A673 (cell line): ENCODE measurements at regions of chr2 and their contacts with region 1.

Region 1: GRCh38 chr2:26970244-26970920 is at the start of gene MAPRE3:
- DNase-seq: peak; percentile 82
- H3K4me3 ChIP-seq: peak within 1 kb of the TSS; percentile 75
- H3K27ac ChIP-seq: no peak within 1 kb of the TSS
- H3K4me1 ChIP-seq: peaks cover 6% of the 10 kb centered on the region
- H3K27me3 ChIP-seq: peaks cover 14% of the 10 kb centered on the region
- CTCF ChIP-seq: no peak
- total RNA-seq, gene MAPRE3: 8.4 and 9.0 TPM in 2 replicates

Region 2: GRCh38 chr2:28658106-28658768 is 1687.9 kb after region 1 on chr2:
- CTCF ChIA-PET with region 1: interaction called, 10 read pairs
- POLR2A ChIA-PET with region 1: no interaction called
- intact Hi-C with region 1: no loop called
- DNase-seq: peak; percentile 37
- H3K4me3 ChIP-seq: no peak overlapping the region
- H3K27ac ChIP-seq: no peak overlapping the region
- H3K4me1 ChIP-seq: no peaks in the 10 kb centered on the region
- H3K27me3 ChIP-seq: no peaks in the 10 kb centered on the region
- CTCF ChIP-seq: no peak